Panc1 (cell line): ENCODE measurements at regions of chr2 and their contacts with region 1.

Region 1: GRCh38 chr2:69683101-69683971 is 39.8 kb upstream of the AAK1 start:
- DNase-seq: no peak
- ATAC-seq: peak; percentile 67; the same call in 1 of the 2 replicates
- H3K4me3 ChIP-seq: no peak overlapping the region
- H3K27ac ChIP-seq: peak overlapping the region; percentile 74
- H3K4me1 ChIP-seq: peaks cover 16% of the 10 kb centered on the region
- H3K27me3 ChIP-seq: no peaks in the 10 kb centered on the region
- CTCF ChIP-seq: no peak

Region 2: GRCh38 chr2:69581774-69582581 is 101.4 kb before region 1 on chr2:
- CTCF ChIA-PET with region 1: no interaction called
- POLR2A ChIA-PET with region 1: no interaction called
- in situ Hi-C with region 1: no loop called
- intact Hi-C with region 1: no loop called
- DNase-seq: no peak
- ATAC-seq: no peak
- H3K4me3 ChIP-seq: no peak overlapping the region
- H3K27ac ChIP-seq: no peak overlapping the region
- H3K4me1 ChIP-seq: peaks cover 23% of the 10 kb centered on the region
- H3K27me3 ChIP-seq: no peaks in the 10 kb centered on the region
- CTCF ChIP-seq: no peak

Region 3: GRCh38 chr2:69634196-69634821 is 49.0 kb before region 1 on chr2:
- CTCF ChIA-PET with region 1: no interaction called
- POLR2A ChIA-PET with region 1: interaction called, 12 read pairs
- in situ Hi-C with region 1: no loop called
- intact Hi-C with region 1: no loop called
- DNase-seq: no peak
- ATAC-seq: no peak
- H3K4me3 ChIP-seq: no peak overlapping the region
- H3K27ac ChIP-seq: no peak overlapping the region
- H3K4me1 ChIP-seq: peaks cover 12% of the 10 kb centered on the region; the same call in 1 of the 2 replicates
- H3K27me3 ChIP-seq: no peaks in the 10 kb centered on the region
- CTCF ChIP-seq: no peak

Region 4: DNA sequence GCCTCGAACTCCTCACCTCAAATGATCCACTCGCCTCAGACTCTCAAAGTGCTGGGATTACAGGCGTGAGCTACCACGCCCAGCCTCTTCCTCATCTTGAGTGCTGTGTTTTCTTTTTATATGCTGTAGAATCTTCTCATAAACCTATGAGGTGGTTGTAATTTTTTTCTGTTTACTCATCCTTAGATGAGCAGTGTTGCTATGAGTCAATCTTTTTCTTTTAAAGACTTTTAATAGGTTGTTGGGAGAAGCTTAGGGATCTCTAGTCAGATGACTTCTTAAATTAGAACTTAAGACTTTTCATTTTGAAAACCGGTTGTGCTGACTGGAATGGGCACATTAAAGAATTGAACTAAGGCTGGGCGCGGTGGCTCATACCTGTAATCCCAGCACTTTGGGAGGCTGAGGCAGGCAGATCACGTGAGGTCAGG is 31.1 kb before region 1 on chr2:
- CTCF ChIA-PET with region 1: no interaction called
- POLR2A ChIA-PET with region 1: no interaction called
- in situ Hi-C with region 1: no loop called
- intact Hi-C with region 1: no loop called
- DNase-seq: no peak
- ATAC-seq: peak; percentile 71; the same call in 1 of the 2 replicates
- H3K4me3 ChIP-seq: no peak overlapping the region
- H3K27ac ChIP-seq: peak overlapping the region; percentile 18; the same call in 1 of the 2 replicates
- H3K4me1 ChIP-seq: 0 out of 2 replicates have a peak, but pooled peaks cover 6% of the 10 kb centered on the region
- H3K27me3 ChIP-seq: no peaks in the 10 kb centered on the region
- CTCF ChIP-seq: no peak